Activated naive CD4-positive, alpha-beta T cell treated with anti-CD3 and anti-CD28 coated beads for 36 hours (primary cell): ENCODE measurements at regions of chr1 and their contacts with region 1.

Region 1: GRCh38 chr1:26993237-26994019 is at the start of gene TRNP1:
- DNase-seq: peak; percentile 76
- H3K4me3 Mint-ChIP-seq: peak within 1 kb of the TSS; percentile 77
- H3K27ac Mint-ChIP-seq: no peak within 1 kb of the TSS
- H3K4me1 Mint-ChIP-seq: peaks cover 22% of the 10 kb centered on the region
- H3K27me3 Mint-ChIP-seq: peaks cover 49% of the 10 kb centered on the region
- total RNA-seq, gene TRNP1: 0.20 to 0.43 TPM

Region 2: GRCh38 chr1:26889551-26890466 is 103.6 kb before region 1 on chr1 and contains the start of gene GPN2:
- CTCF ChIA-PET with region 1: no interaction called
- intact Hi-C with region 1: loop called (anchors 5 kb)
- DNase-seq: peak; percentile 82
- H3K4me3 Mint-ChIP-seq: peak within 1 kb of the TSS; percentile 94
- H3K27ac Mint-ChIP-seq: peak within 1 kb of the TSS; percentile 91
- H3K4me1 Mint-ChIP-seq: peaks cover 30% of the 10 kb centered on the region
- H3K27me3 Mint-ChIP-seq: no peaks in the 10 kb centered on the region
- total RNA-seq, gene GPN2: 19.8 to 20.7 TPM

Region 3: DNA sequence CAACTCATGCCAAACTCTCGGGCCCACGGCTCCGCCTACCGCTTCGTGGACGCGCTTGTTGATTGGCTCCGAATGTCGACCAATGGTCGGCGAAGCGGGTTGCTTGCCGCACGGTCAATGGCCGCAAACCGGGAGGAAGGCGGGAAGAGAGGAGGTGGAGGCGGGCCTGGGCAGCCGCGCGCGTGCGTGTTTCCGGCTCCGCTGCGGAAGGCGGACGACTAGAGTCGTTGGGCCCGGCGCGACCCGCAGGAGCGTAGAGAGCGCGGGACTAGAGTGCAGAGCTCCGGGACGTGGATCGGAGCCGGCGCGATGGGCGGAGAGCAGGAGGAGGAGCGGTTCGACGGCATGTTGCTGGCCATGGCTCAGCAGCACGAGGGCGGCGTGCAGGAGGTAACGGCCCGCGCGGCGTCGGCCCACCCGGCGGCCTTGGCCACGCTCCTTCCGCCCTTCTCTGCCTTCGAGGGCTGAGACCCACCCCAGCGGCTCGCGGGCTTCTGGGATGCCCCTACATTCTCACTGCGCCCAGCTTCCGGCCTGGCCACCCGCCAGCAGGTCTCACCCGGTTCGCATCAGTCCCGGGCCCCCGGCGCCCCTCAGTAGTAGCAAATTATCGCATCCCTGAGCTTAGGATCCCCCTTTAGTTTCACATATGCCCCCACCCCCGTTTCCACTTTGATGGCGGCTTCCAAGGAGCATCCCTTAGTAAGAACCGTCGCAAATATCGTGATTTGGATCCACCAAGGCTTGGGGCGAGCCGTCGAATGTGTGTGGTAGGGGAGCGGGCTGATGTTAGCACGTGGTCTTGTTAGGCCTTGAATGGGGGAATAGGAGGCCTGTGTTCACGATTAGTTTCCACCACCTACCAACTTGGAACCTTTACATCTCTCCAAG is 71.6 kb before region 1 on chr1 and contains the start of gene NUDC:
- CTCF ChIA-PET with region 1: no interaction called
- intact Hi-C with region 1: loop called (anchors 5 kb)
- DNase-seq: peak; percentile 98
- H3K4me3 Mint-ChIP-seq: peak within 1 kb of the TSS; percentile 99
- H3K27ac Mint-ChIP-seq: peak within 1 kb of the TSS; percentile 93
- H3K4me1 Mint-ChIP-seq: peaks cover 37% of the 10 kb centered on the region
- H3K27me3 Mint-ChIP-seq: no peaks in the 10 kb centered on the region
- total RNA-seq, gene NUDC: 75.3 to 78.1 TPM

Region 4: GRCh38 chr1:26961826-26962225 is 31.6 kb before region 1 on chr1:
- CTCF ChIA-PET with region 1: interaction called, 6 read pairs
- intact Hi-C with region 1: loop called (anchors 1 kb)
- DNase-seq: no peak
- H3K4me3 Mint-ChIP-seq: no peak overlapping the region
- H3K27ac Mint-ChIP-seq: no peak overlapping the region
- H3K4me1 Mint-ChIP-seq: peaks cover 8% of the 10 kb centered on the region
- H3K27me3 Mint-ChIP-seq: peaks cover 21% of the 10 kb centered on the region